Dendritic cell treated with granulocyte-macrophage colony-stimulating factor and Interleukin-4, amounts not matched to agents 40 ng/mL and 50 ng/mL, for 4 days (primary cell): ENCODE measurements at regions of chr17 and their contacts with region 1.

Region 1: GRCh38 chr17:40113110-40113906 is 8.5 kb upstream of the MSL1 start:
- H3K4me3 Mint-ChIP-seq: peak overlapping the region; percentile 75
- H3K27ac Mint-ChIP-seq: peak overlapping the region; percentile 97
- H3K4me1 Mint-ChIP-seq: peaks cover 57% of the 10 kb centered on the region
- H3K27me3 Mint-ChIP-seq: peaks cover 6% of the 10 kb centered on the region

Region 2: DNA sequence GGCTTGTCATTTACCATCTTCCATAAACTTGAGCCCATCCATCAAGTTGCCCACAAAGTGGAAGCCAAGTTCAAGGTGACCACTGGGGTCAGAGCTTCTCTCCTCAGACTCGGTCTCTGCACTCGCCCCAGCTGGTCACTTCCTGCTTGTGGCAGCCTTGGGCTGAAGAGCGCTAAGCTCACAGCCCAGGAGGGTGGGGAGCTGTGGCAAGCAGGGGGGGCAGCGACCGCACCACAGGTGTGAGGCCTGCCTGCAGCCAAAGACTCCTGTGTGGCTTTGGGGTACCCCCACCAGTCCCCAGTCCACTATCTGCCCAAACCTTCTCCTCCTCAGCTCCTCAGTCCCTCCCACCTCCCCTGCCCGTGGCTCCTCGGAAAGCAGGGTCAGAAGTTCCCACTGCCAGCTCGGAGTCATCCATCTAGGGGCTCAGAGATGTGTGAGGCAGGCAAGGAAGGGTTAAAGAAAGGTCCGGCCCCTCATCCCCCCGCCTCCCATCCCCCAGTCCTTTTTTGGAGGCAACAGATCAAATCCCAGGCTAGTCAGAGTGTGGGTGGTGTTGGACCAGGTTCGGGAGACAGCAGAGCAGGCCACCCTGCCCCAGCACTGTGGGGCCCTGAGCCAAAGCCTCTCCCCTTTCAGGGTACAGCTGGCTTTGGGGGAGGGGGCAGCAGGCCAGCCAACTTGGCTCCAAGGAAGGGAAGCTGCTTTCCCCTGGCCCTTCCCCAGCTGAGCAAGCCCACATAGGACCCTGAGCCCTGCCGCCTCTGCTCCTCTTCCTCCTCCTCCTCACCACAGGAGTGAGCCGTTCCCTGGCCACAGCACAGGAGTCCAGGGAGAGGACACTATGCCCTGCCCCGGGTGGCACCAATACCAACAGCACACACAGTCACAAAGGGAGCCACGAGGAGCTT is 94.8 kb before region 1 on chr17:
- intact Hi-C with region 1: loop called (anchors 1 kb)
- H3K4me3 Mint-ChIP-seq: no peak overlapping the region
- H3K27ac Mint-ChIP-seq: no peak overlapping the region
- H3K4me1 Mint-ChIP-seq: peaks cover 21% of the 10 kb centered on the region
- H3K27me3 Mint-ChIP-seq: peaks cover 21% of the 10 kb centered on the region

Region 3: GRCh38 chr17:40062329-40063186 is 50.8 kb before region 1 on chr17 and contains the start of gene THRA:
- intact Hi-C with region 1: loop called (anchors 1 kb)
- H3K4me3 Mint-ChIP-seq: peak within 1 kb of the TSS; percentile 79
- H3K27ac Mint-ChIP-seq: peak within 1 kb of the TSS; percentile 38
- H3K4me1 Mint-ChIP-seq: peaks cover 48% of the 10 kb centered on the region
- H3K27me3 Mint-ChIP-seq: peaks cover 34% of the 10 kb centered on the region

Region 4: GRCh38 chr17:40100669-40101366 is 12.5 kb before region 1 on chr17:
- intact Hi-C with region 1: loop called (anchors 1 kb)
- H3K4me3 Mint-ChIP-seq: peak overlapping the region; percentile 85
- H3K27ac Mint-ChIP-seq: peak overlapping the region; percentile 92
- H3K4me1 Mint-ChIP-seq: peaks cover 94% of the 10 kb centered on the region
- H3K27me3 Mint-ChIP-seq: peaks cover 46% of the 10 kb centered on the region

Region 5: GRCh38 chr17:40168262-40168832 is 55.0 kb after region 1 on chr17:
- intact Hi-C with region 1: loop called (anchors 1 kb)
- H3K4me3 Mint-ChIP-seq: no peak overlapping the region
- H3K27ac Mint-ChIP-seq: peak overlapping the region; percentile 5
- H3K4me1 Mint-ChIP-seq: peaks cover 9% of the 10 kb centered on the region
- H3K27me3 Mint-ChIP-seq: no peaks in the 10 kb centered on the region